Left colon (tissue), 2 donors: ENCODE measurements at regions of chr19 and their contacts with region 1.

Region 1: GRCh38 chr19:54231077-54231931 is 8.5 kb upstream of the LILRB3 start:
- DNase-seq: peak; percentile 86 to 93
- ATAC-seq: peak; percentile 99

Region 2: DNA sequence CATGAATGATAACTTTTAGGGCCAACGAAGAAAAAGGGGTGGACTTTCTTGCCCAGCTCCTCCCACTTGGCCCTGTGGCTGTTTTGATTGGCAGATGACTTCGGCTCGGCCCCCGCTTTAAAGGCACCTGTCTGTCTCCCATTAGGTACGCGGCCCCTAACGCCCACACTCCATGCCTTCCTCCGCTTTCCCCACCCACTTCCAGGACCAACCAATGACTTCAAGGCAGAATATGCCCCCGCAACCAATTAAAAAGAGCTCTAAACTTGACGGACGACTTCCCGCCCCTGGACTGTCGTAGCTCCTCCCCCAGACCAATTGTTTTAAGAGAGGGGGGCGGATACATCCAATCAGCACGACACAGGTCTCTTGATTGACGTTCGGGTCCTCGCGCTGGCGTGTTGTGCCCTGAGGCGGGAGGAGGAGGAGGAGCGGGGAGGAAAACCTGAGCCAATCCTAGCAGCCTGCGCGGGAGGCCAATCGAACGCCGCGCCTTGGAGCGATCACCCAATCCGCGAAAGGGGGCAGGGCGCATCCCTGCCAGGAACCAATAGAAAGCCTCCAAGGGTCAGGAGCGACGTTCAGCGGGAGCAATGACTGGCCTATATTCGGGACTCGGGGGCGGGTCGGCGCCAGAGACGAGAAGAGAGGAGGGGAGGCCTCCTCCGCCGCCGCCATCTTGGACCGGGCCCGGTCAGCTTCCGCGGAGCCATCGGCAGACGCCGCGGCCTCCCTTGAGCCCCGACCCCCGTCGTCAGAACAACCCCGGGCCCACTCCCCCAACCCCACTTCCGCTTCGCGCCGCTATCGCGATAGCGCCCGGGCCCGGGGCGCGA is 94.0 kb before region 1 on chr19 and contains the start of gene CNOT3:
- intact Hi-C with region 1: no loop called
- DNase-seq: peak; percentile 98 to 100
- ATAC-seq: peak; percentile 82
- total RNA-seq, gene CNOT3: 32.9 to 42.2 TPM

Region 3: DNA sequence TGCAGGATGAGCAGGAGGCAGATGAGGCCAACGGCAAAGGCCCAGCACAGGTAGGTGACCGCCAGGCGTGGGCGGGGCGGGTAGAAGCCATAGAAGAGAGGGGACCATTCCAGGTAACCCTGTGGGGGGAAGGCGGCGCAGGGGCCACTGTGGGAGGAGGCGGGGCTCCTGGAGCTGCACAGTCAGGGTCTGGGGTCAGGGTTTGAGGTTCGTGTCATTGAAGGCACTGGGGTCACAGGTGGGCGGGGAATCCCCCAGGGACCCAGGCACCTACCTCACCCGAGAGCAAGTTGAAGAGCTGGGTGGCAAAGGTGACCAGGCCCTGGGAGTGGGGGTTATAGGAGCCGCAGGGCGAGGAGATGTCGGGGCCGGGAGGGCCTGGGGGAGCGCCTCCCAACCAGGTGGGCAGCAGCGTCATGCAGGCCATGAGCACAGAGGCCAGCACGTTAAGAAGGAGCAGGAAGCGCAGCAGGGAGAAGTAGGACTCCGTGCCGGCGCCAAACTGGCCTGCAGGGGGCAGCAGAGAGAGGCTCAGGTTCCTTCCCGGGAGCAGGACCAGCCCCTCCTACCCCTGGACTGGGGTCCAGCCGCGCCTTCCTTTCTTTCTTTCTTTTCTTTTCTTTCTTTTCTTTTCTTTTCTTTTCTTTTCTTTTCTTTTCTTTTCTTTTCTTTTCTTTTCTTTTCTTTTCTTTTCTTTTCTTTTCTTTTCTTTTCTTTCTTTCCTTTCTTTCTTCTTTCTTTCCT is 63.0 kb before region 1 on chr19:
- intact Hi-C with region 1: loop called in 1 of 2 experiments (anchors 5 kb)
- DNase-seq: peak; percentile 87 to 98
- ATAC-seq: peak; percentile 37